Posterior cingulate gyrus (tissue), 11 donors: ENCODE measurements at regions of chr13 and their contacts with region 1.

Region 1: DNA sequence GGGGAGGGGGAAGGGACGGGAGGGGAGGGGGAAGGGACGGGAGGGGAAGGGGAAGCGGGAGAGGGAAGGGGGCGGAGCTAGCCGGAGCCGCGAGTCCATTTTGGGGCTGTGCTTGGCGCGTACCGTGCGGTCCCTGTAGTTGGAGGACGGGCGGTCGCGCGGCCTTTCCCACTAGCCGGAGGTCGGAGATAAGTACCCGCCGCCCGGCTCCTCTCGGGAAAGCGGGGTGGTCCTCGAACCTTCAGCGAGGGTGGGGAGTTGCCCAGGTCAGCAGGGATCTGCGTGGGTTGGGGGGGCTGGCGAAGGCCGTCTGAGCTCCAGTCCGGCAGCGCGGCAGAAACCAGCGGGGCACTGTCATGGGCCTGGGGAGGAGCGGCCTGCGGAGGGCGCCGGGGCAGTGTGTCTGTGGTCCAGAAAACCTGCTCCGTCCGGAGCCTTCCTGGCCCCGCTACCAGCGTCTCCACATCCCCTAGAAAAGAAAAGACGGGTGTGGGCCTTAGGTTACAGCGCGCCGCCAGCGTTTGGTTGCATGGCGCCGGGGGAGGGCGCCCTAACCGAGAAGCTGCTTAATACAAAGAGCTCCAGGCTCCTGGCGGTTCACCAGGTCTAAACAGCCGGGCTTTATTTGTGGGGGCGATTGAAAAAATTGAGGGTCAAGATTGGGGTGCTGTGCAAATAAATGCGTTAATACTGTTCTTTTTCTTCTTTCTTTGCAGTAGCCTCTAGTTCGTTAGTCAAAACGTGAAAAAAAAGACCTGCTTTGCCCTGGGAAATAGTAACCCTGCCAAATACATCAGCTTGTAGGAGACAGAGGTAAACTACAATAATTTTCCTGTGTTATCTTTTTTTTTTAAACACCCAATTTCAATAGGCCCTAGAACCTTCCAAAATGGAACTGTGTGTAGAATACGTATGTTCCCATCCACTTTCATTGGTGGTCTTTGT is at the start of gene TRIM13:
- DNase-seq: peak; percentile 80 to 98 (median 88)

Region 2: GRCh38 chr13:48783181-48783630 is 1214.0 kb before region 1 on chr13:
- intact Hi-C with region 1: no loop called
- DNase-seq: peak in 1 of 10 donors; percentile 80

Region 3: GRCh38 chr13:49936085-49936940 is 60.9 kb before region 1 on chr13 and contains the start of gene SPRYD7:
- intact Hi-C with region 1: loop called (anchors 5 kb)
- DNase-seq: peak; percentile 95 to 100 (median 98)

Region 4: GRCh38 chr13:50068508-50068907 is 71.3 kb after region 1 on chr13:
- intact Hi-C with region 1: no loop called
- DNase-seq: no peak

Region 5: GRCh38 chr13:50123862-50124536 is 126.8 kb after region 1 on chr13:
- intact Hi-C with region 1: loop called (anchors 2 kb)
- DNase-seq: peak in 8 of 10 donors; percentile 34 to 99 (median 84)